ENCODE measurements at regions of chr11 and their contacts with region 1.

Region 1: GRCh38 chr11:6353367-6353987 is 33.2 kb upstream of the CAVIN3 start:
- DNase-seq: peak; percentile 70
- ATAC-seq: peak; percentile 77

Region 2: DNA sequence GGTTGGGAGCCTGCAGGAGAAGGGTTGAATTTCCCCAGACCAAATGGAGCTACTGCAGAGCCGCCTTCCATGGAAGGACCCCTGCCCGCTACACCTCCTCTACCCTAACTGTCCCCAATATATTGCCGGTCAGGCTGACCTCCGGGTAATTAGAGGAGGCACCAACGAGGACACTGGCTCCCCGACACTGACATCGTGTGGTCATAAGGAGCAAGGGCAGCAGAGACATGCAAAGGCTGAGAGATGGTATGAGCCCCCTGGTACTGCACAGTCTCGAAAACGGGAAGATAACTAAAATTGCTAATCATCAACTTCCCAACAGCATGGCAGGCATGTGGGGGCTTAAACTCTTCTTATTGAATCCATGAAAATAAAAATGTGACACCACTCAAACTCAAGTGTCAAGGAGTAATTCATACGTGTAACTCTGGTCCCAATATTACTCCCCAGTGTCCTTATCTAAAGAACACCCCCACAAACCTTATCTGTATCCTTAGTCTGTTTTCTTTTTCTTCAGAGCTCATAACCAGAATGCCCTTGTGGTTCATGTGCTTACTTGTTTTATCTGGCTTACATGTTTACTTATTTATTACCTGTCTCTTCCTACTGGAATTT is 37.6 kb before region 1 on chr11:
- intact Hi-C with region 1: loop called (anchors 5 kb)
- DNase-seq: peak; percentile 75
- ATAC-seq: peak; percentile 39

Measured in sciatic nerve (tissue), 2 donors.